ENCODE measurements at regions of chr5 and their contacts with region 1.

Region 1: DNA sequence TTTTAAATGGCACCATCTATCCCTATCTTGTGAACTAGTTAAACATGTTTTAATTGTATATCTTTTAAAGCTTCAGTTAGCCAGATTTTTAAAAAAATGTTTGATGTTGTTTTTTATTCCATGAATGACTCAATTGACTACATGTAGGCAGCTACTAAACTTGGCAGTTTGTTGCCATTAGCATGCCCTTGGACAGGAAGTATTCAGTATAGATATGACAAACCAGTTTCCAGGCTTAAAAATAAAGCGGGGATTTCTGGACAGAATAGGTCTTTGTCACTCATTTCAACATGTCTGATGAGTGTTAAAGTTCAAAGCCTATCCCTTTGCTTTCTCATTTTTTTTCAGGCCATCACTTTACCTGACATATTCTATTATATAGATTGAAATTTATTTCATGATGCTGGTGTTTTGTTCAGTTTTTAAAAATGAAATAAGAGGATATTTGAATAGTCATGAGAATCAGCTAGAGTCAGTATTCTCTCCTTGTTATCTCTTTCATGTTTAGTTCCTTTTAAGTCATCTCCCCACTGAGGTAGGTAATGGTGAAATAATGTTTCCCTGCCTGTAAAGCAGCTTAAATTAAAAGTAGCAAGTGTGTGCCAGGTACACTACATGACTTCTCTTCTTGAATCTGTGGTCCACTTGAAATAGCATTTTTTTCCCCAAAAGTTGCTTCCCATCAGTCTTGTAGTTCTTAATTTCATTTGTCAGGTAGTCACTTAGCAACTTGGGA is 11.9 kb downstream of the TNFAIP8 start:
- DNase-seq: no peak
- ATAC-seq: peak; percentile 71
- H3K4me3 Mint-ChIP-seq: peak overlapping the region; percentile 57
- H3K27ac Mint-ChIP-seq: peak overlapping the region; percentile 81
- H3K4me1 Mint-ChIP-seq: peaks cover 73% of the 10 kb centered on the region
- H3K27me3 Mint-ChIP-seq: no peaks in the 10 kb centered on the region

Region 2: DNA sequence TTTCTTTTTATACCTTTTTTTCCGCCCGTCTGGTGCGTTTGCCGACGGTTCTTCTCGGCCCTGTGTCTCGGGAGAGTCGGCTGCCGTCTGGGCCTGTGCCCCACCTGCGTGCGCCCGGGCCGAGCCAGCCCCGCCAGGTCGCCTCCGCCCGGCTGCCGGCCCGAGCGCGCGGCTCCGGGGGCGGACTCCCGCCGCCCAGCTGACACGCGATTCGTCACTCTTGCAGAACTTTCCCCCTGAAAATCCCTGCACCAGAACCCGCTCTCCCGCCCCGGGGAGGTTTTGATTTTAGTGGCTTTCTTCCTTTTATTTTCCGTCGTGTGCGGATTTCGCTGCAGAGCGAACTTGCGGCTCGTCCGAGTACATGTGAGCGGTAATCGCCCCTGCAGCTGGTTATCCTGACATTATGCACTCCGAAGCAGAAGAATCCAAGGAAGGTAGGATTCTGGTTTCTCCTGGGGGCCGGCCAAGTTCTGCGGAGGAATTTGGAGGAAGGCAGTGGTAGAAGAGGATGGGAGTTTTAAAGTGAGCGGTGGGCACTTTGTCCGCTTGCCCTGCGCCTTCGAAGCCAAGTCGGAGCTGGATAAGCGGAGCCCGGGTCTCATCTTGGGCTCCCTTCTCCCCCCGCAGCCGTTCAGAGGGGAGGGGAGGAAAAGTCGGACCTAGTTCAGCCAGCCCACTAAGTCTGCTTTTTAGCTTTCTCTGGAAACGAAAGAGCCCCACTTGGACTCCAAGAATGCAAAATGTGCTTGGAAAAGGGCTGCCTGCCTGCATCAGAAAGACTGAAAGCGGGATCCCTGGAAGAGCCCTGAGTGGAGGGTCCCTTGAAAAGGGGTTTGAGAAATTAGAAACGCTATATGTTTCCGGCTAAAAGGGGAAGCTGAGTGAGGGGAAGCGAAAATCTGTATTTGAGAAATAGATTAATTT is 11.7 kb before region 1 on chr5 and contains the start of gene TNFAIP8:
- CTCF ChIA-PET with region 1: interaction called, 12 read pairs
- DNase-seq: peak; percentile 71
- ATAC-seq: peak; percentile 59
- H3K4me3 Mint-ChIP-seq: peak within 1 kb of the TSS; percentile 91
- H3K27ac Mint-ChIP-seq: peak within 1 kb of the TSS; percentile 90
- H3K4me1 Mint-ChIP-seq: peaks cover 75% of the 10 kb centered on the region
- H3K27me3 Mint-ChIP-seq: no peaks in the 10 kb centered on the region
- total RNA-seq, gene TNFAIP8: 106 to 109 TPM

Measured in activated CD8-positive, alpha-beta memory T cell treated with anti-CD3 and anti-CD28 coated beads, Interleukin-2, amount 10 ng/mL, durations not matched to agents 7 days and 5 days (primary cell).